CD4-positive, alpha-beta memory T cell (primary cell): ENCODE measurements at regions of chr12 and their contacts with region 1.

Region 1: DNA sequence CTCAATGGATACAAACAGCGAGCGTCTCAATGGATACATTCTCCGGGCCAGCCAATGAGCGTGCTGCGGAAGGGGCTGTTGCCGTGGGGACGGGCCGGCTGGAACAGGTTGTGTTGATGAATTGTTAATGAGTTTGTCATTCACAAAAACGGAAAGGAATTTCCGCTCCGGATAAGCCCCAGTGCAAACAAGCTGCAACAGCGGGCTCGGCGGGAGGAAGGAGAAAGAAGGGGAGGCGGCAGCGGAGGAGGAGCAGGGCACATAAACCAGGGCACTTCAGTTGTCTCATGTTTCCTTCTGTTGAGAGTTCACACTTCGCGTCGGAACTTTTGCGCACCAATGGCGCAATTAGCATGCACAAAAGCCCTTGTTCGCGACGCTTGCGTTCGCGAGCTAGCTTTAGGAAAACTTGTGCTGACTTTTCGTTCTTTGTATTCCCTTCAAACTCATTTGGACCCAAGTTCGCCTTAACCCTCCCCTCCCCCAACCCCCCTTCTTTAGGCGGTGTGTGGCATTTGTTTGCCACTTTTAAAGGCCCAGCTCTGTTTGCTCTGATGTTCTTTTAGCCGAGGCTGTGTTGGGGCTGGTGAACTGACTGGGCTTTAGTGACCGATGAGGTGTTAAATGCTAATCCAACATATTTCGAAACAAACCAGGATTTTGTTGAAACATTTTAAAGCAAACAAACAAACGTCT is at the start of gene DUSP6:
- DNase-seq: peak; percentile 86 to 95 (median 90)
- H3K4me3 ChIP-seq: peak within 1 kb of the TSS; percentile 70 to 83
- H3K4me3 Mint-ChIP-seq: peak within 1 kb of the TSS; percentile 87 to 98 (median 92)
- H3K27ac ChIP-seq: peak within 1 kb of the TSS; percentile 68
- H3K27ac Mint-ChIP-seq: peak within 1 kb of the TSS; percentile 86 to 95 (median 92)
- H3K4me1 ChIP-seq: peaks cover 48% of the 10 kb centered on the region
- H3K4me1 Mint-ChIP-seq: peaks cover 27 to 56% (median 40%) of the 10 kb centered on the region in 4 donors
- H3K27me3 ChIP-seq: no peaks in the 10 kb centered on the region
- H3K27me3 Mint-ChIP-seq: no peaks in the 10 kb centered on the region
- total RNA-seq, gene DUSP6: 0.90 to 1.9 TPM

Region 2: GRCh38 chr12:88141770-88142609 is 1210.7 kb before region 1 on chr12 and contains the starts of genes CEP290 and TMTC3:
- CTCF ChIA-PET with region 1: no interaction called
- POLR2A ChIA-PET with region 1: interaction called, 4 read pairs
- intact Hi-C with region 1: loop called (anchors 5 kb)
- DNase-seq: peak; percentile 94 to 99 (median 95)
- H3K4me3 ChIP-seq: peak within 1 kb of the TSS; percentile 87 to 88
- H3K4me3 Mint-ChIP-seq: peak within 1 kb of the TSS; percentile 94 to 98 (median 96)
- H3K27ac ChIP-seq: peak within 1 kb of the TSS; percentile 76
- H3K27ac Mint-ChIP-seq: peak within 1 kb of the TSS; percentile 90 to 99 (median 98)
- H3K4me1 ChIP-seq: peaks cover 29% of the 10 kb centered on the region
- H3K4me1 Mint-ChIP-seq: peaks cover 27 to 52% (median 41%) of the 10 kb centered on the region in 4 donors
- H3K27me3 ChIP-seq: no peaks in the 10 kb centered on the region
- H3K27me3 Mint-ChIP-seq: no peaks in the 10 kb centered on the region
- total RNA-seq, gene CEP290: 22.4 to 23.0 TPM
- total RNA-seq, gene TMTC3: 11.5 to 15.2 TPM

Region 3: DNA sequence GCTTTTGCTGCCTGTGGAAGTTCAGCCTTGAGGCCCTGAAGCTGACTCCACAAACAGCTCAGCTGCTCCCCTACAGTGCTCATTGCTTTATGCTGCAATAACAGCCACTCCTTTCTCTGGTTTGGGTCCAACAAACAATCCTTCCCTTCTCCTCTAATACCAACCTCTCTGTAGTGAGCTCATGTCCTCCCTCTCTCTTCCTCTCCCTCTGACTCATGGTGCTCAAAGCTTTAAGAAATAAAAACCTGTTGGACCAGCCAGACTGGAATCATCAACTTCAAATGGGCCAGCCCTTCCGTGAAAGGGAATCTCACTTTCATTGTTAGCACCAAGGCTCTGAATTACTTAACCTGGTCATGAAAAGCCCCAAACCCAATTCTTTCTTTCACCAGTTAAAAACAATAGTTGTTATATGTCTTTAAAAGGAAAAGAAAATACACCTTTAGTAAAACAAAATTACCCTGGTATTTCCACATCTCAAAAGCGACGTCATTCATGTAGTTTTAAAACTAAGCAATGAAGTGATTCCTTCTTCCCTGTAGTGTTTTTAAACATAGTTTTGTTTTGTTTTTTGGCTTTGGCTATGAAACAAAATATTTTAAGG is 126.7 kb before region 1 on chr12:
- CTCF ChIA-PET with region 1: interaction called, 3 read pairs
- POLR2A ChIA-PET with region 1: interaction called, 8 read pairs
- intact Hi-C with region 1: loop called (anchors 5 kb)
- DNase-seq: no peak
- H3K4me3 ChIP-seq: no peak overlapping the region
- H3K4me3 Mint-ChIP-seq: peak overlapping the region in 6 of 8 donors; percentile 0 to 75 (median 56)
- H3K27ac ChIP-seq: no peak overlapping the region
- H3K27ac Mint-ChIP-seq: peak overlapping the region; percentile 7 to 85 (median 77)
- H3K4me1 ChIP-seq: peaks cover 23% of the 10 kb centered on the region
- H3K4me1 Mint-ChIP-seq: peaks cover 19 to 28% (median 25%) of the 10 kb centered on the region in 4 donors
- H3K27me3 ChIP-seq: no peaks in the 10 kb centered on the region
- H3K27me3 Mint-ChIP-seq: no peaks in the 10 kb centered on the region

Region 4: DNA sequence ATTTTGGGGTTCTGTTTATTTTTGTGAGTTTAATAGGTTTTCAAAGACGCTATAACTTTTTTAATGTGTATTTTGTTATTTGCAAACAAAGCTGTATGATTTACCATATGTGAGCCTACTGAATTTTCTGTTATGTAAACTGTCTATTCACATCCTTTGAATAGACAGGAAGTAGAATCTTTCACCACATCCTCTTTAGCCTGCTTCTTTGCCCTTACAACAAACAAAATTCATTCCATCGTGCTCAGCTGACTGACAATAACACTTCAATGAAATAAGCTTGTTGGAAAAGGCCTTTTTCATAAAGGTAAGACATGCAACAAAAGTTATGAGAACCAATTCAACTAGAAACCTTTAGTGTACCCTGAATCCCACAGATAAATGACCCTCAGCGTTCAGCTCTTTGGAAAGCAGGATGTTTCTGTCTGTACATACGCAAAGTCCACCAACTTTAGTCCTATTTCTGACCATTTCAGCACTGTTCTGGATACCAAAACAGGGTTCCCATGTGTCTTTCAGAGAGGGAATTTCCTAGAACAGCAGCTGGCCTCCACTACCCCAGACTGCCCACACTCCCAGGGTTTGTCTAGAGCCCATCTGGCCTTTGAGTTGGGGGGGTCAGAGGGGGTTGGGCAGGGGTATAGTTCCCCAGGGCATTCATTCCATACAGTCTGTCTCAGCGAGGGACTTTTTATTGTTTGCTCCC is 71.7 kb before region 1 on chr12:
- CTCF ChIA-PET with region 1: interaction called, 4 read pairs
- POLR2A ChIA-PET with region 1: interaction called, 10 read pairs
- intact Hi-C with region 1: loop called (anchors 1 kb)
- DNase-seq: peak in 4 of 5 donors; percentile 9 to 66 (median 44)
- H3K4me3 ChIP-seq: peak overlapping the region; percentile 0 to 4
- H3K4me3 Mint-ChIP-seq: peak overlapping the region in 7 of 8 donors; percentile 9 to 78 (median 65)
- H3K27ac ChIP-seq: no peak overlapping the region
- H3K27ac Mint-ChIP-seq: peak overlapping the region in 6 of 7 donors; percentile 22 to 78 (median 60)
- H3K4me1 ChIP-seq: peaks cover 26% of the 10 kb centered on the region
- H3K4me1 Mint-ChIP-seq: peaks cover 6 to 47% (median 18%) of the 10 kb centered on the region in 4 donors
- H3K27me3 ChIP-seq: no peaks in the 10 kb centered on the region
- H3K27me3 Mint-ChIP-seq: no peaks in the 10 kb centered on the region

Region 5: DNA sequence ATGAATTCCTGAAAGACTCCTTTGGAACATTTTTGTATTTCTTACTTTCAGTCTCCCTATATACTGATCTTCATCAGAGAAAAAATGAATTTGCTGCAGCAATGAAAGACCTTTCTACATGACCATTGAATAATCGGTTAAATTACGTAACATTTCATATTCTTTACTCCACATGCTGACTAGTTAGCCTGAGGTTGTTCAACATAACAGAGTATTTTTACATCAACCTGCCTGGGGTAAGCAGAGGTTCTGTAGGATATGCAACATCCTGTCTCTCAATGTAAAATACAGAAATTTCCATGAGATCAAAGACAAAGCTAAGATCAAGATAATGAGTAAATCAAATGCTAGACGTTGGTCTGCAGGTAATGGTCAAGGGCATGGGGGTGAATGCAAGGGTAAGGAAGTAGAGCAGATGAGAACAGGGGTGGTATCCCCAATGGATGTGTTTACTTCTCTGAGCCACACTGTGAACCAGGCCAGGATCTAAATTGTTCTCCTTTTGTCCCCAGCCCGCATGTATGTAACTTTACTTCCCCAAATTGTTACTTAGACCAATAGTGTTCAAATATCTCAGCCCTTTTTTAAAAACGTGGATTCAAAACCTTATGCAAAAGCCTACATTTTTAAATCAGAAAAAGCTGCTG is 45.7 kb before region 1 on chr12:
- CTCF ChIA-PET with region 1: no interaction called
- POLR2A ChIA-PET with region 1: no interaction called
- intact Hi-C with region 1: no loop called
- DNase-seq: no peak
- H3K4me3 ChIP-seq: no peak overlapping the region
- H3K4me3 Mint-ChIP-seq: peak overlapping the region in 1 of 8 donors; percentile 19
- H3K27ac ChIP-seq: no peak overlapping the region
- H3K27ac Mint-ChIP-seq: no peak overlapping the region
- H3K4me1 ChIP-seq: peaks cover 8% of the 10 kb centered on the region
- H3K4me1 Mint-ChIP-seq: peaks cover 7 to 25% (median 14%) of the 10 kb centered on the region in 4 donors
- H3K27me3 ChIP-seq: no peaks in the 10 kb centered on the region
- H3K27me3 Mint-ChIP-seq: no peaks in the 10 kb centered on the region

Region 6: DNA sequence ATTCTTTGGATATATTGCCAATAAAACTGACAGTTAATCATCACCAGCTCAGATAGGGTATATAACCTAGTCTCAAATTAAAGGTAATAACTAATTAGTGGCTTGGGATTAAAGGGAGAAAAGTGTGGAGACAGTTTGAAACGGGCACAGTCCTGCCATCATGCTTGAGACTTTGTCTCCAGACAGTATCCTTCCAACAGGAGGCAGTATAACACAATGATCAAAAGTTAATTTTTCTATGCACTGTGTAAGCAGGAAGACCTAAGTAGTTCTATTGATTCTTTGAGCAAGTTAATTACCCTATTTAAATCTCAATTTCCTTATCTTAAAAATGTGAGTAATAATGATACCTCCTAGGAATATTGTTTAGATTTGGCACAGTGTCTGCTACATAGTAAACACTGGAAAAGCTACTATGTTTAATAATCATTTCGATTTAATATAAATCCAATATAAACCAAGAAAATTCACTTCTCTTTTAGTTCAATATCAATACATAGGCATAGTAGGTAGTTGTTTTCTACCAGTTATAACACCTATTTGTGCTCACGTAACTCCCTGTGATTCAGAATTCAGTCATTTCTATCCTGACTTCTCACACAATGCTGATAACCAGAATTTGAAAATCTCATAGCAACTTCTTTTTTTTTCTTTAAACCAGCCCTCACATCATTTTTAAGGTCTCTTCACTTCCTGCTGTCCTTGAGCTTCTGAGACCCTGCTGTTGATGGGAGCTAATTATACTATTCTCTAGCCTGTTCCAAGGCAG is 118.3 kb after region 1 on chr12:
- CTCF ChIA-PET with region 1: interaction called, 4 read pairs
- POLR2A ChIA-PET with region 1: interaction called, 3 read pairs
- intact Hi-C with region 1: loop called (anchors 2 kb)
- DNase-seq: peak in 4 of 5 donors; percentile 47 to 55 (median 53)
- H3K4me3 ChIP-seq: no peak overlapping the region
- H3K4me3 Mint-ChIP-seq: peak overlapping the region in 2 of 8 donors; percentile 41 to 55
- H3K27ac ChIP-seq: no peak overlapping the region
- H3K27ac Mint-ChIP-seq: peak overlapping the region in 4 of 7 donors; percentile 28 to 84 (median 76)
- H3K4me1 ChIP-seq: peaks cover 52% of the 10 kb centered on the region
- H3K4me1 Mint-ChIP-seq: peaks cover 34 to 60% (median 46%) of the 10 kb centered on the region in 4 donors
- H3K27me3 ChIP-seq: no peaks in the 10 kb centered on the region
- H3K27me3 Mint-ChIP-seq: no peaks in the 10 kb centered on the region

Region 7: GRCh38 chr12:89862511-89863179 is 510.0 kb after region 1 on chr12:
- CTCF ChIA-PET with region 1: no interaction called
- POLR2A ChIA-PET with region 1: interaction called, 7 read pairs
- intact Hi-C with region 1: loop called (anchors 2 kb)
- DNase-seq: peak; percentile 68 to 79 (median 75)
- H3K4me3 ChIP-seq: peak overlapping the region; percentile 26 to 39
- H3K4me3 Mint-ChIP-seq: peak overlapping the region; percentile 69 to 87 (median 82)
- H3K27ac ChIP-seq: peak overlapping the region; percentile 95
- H3K27ac Mint-ChIP-seq: peak overlapping the region; percentile 91 to 99 (median 99)
- H3K4me1 ChIP-seq: peaks cover 62% of the 10 kb centered on the region
- H3K4me1 Mint-ChIP-seq: peaks cover 56 to 81% (median 68%) of the 10 kb centered on the region in 4 donors
- H3K27me3 ChIP-seq: no peaks in the 10 kb centered on the region
- H3K27me3 Mint-ChIP-seq: no peaks in the 10 kb centered on the region